HCT116 (cell line): ENCODE measurements at regions of chr2 and their contacts with region 1.

Region 1: GRCh38 chr2:11292464-11293255 is 51.8 kb downstream of the ROCK2 start:
- DNase-seq: no peak
- ATAC-seq: peak; percentile 75
- H3K4me3 ChIP-seq: no peak overlapping the region
- H3K27ac ChIP-seq: no peak overlapping the region
- H3K4me1 ChIP-seq: peaks cover 7 to 8% of the 10 kb centered on the region in 2 experiments; a peak in 2 of 4 replicates
- H3K27me3 ChIP-seq: no peaks in the 10 kb centered on the region
- CTCF ChIP-seq: no peak
- POLR2A ChIP-seq: no peak
- RAD21 ChIP-seq: no peak

Region 2: DNA sequence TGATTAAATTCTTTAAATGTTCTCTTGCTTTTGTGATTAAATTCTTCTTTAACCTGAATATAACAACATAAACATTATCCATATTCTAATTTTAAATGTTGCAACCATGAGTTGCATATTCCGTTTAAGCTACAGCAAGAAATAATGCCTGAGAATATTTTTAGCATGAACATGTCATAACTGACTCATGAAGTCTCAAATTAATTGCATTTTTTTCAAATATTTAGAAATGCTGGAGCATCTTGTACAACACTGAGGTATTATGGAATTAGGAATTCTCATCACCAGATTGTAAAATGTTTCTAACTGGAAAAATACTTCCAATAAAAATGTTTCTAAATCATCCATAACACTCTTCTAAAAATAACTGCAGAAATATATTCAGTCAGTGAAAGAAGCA is 37.1 kb after region 1 on chr2:
- CTCF ChIA-PET with region 1: no interaction called
- POLR2A ChIA-PET with region 1: no interaction called
- RAD21 ChIA-PET with region 1: no interaction called
- intact Hi-C with region 1: loop called (anchors 5 kb)
- DNase-seq: no peak
- ATAC-seq: no peak
- H3K4me3 ChIP-seq: no peak overlapping the region
- H3K27ac ChIP-seq: no peak overlapping the region
- H3K4me1 ChIP-seq: peaks cover 0 to 7% of the 10 kb centered on the region in 2 experiments; a peak in 1 of 4 replicates
- H3K27me3 ChIP-seq: no peaks in the 10 kb centered on the region
- CTCF ChIP-seq: no peak
- POLR2A ChIP-seq: no peak
- RAD21 ChIP-seq: no peak